Aorta (tissue), 5 donors: ENCODE measurements at regions of chr6 and their contacts with region 1.

Region 1: DNA sequence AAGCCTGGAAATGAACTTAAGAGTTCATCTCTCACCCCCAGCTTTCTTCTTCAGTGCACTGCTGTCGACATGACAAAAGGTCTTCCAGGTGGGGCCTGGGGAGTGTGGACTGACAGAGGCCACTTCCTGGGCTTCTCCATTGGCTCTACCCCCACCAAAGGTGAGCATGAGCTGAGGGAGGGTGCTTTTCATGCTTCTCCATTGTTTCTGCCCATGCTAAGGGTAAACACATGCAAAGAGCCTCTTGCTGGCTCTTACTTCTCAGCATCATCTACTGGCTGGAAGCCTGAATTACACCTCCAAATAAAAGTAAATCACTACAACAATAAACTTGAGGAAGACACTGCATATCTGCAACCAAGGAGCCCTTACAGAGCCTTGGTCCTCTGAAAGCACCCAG is 227.2 kb downstream of the EPM2A start:
- DNase-seq: no peak
- ATAC-seq: no peak
- H3K4me3 ChIP-seq: no peak overlapping the region
- H3K27ac ChIP-seq: no peak overlapping the region
- H3K4me1 ChIP-seq: no peaks in the 10 kb centered on the region
- H3K27me3 ChIP-seq: no peaks in the 10 kb centered on the region

Region 2: DNA sequence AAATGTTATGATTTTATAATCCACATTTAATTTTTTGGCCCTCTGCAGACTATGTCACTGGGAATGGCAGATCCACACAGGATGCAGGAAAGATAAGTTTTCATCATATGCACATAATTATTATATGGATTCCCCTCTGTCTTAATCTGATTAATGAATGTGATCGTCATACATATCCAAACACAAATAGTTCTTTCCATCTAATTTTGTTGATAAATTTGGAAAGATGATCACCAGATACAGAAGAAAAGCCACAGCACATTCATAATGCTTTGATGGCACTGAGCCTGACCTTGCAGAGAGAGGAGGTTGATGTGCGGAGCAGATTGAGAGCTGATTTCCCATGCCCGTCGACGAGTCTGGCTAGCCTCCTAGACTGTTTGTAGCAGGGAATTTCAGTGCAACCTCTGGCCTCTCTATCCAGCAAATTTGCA is 244.3 kb before region 1 on chr6:
- intact Hi-C with region 1: loop called in 1 of 2 experiments (anchors 5 kb)
- DNase-seq: no peak
- ATAC-seq: no peak
- H3K4me3 ChIP-seq: no peak overlapping the region
- H3K27ac ChIP-seq: no peak overlapping the region
- H3K4me1 ChIP-seq: peaks cover 0 to 2% of the 10 kb centered on the region in 2 donors
- H3K27me3 ChIP-seq: peaks cover 0 to 1% of the 10 kb centered on the region in 2 donors

Region 3: DNA sequence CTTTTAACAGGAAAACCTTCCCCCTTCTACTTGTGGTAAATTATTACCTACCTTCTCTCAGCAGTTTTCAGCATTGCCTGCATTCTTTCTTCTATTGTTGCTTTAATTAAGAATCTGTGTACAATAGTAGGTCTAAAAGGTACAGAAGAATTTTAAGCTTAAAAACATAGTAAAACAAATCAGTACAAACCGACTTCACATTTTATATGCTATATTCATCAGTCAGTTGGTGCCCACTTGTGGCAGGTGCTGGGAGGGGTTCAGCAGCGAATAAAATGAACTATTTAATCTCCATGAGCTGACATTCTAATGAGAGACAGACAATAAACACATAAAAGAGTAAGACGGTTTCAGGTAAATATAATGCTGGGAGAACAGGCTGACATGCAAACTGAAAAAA is 379.9 kb after region 1 on chr6:
- intact Hi-C with region 1: no loop called
- DNase-seq: peak in 1 of 2 donors; percentile 42
- ATAC-seq: no peak
- H3K4me3 ChIP-seq: no peak overlapping the region
- H3K27ac ChIP-seq: no peak overlapping the region
- H3K4me1 ChIP-seq: no peaks in the 10 kb centered on the region
- H3K27me3 ChIP-seq: no peaks in the 10 kb centered on the region